ENCODE measurements at regions of chr17 and their contacts with region 1.

Region 1: DNA sequence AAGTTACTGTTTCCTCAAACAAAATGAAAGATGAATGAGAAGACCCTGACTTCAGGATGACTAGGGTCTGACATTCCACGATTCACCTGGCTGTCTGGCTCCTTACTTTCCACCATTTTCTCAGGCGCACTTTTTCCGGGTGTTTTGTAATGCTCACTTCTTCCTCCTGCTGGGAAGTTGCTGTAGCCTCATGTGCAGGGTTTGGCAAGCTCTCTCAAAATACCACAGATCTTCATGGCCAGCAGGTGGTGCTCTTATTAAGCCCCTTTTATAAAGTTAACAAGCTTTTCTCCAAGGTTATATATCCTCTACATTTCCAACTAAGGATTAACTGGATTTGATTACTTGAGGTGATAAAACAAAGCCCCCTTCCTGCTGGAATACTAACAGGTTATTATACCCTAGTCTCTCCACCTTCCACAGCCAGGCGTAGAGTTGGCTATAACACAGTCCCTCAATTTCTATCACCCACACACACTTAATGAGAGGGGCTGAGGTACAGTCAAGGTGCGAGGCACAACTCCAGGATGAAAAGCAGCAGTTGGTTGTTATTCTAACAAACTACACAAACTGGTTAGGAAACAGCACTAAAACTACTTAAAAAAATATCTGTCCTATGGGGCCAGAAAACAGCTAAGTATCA is 45.4 kb downstream of the STH start:
- DNase-seq: peak; percentile 61
- H3K4me3 ChIP-seq: no peak overlapping the region
- CTCF ChIP-seq: peak; percentile 74

Region 2: GRCh38 chr17:45995627-45996270 is 48.7 kb before region 1 on chr17:
- CTCF ChIA-PET with region 1: no interaction called
- POLR2A ChIA-PET with region 1: no interaction called
- DNase-seq: no peak
- H3K4me3 ChIP-seq: no peak overlapping the region
- CTCF ChIP-seq: no peak

Region 3: DNA sequence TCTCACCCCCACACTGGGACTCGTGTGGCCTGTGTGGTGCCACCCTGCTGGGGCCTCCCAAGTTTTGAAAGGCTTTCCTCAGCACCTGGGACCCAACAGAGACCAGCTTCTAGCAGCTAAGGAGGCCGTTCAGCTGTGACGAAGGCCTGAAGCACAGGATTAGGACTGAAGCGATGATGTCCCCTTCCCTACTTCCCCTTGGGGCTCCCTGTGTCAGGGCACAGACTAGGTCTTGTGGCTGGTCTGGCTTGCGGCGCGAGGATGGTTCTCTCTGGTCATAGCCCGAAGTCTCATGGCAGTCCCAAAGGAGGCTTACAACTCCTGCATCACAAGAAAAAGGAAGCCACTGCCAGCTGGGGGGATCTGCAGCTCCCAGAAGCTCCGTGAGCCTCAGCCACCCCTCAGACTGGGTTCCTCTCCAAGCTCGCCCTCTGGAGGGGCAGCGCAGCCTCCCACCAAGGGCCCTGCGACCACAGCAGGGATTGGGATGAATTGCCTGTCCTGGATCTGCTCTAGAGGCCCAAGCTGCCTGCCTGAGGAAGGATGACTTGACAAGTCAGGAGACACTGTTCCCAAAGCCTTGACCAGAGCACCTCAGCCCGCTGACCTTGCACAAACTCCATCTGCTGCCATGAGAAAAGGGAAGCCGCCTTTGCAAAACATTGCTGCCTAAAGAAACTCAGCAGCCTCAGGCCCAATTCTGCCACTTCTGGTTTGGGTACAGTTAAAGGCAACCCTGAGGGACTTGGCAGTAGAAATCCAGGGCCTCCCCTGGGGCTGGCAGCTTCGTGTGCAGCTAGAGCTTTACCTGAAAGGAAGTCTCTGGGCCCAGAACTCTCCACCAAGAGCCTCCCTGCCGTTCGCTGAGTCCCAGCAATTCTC is 18.0 kb before region 1 on chr17:
- CTCF ChIA-PET with region 1: interaction called, 62 read pairs
- POLR2A ChIA-PET with region 1: no interaction called
- DNase-seq: no peak
- H3K4me3 ChIP-seq: no peak overlapping the region
- CTCF ChIP-seq: no peak

Region 4: DNA sequence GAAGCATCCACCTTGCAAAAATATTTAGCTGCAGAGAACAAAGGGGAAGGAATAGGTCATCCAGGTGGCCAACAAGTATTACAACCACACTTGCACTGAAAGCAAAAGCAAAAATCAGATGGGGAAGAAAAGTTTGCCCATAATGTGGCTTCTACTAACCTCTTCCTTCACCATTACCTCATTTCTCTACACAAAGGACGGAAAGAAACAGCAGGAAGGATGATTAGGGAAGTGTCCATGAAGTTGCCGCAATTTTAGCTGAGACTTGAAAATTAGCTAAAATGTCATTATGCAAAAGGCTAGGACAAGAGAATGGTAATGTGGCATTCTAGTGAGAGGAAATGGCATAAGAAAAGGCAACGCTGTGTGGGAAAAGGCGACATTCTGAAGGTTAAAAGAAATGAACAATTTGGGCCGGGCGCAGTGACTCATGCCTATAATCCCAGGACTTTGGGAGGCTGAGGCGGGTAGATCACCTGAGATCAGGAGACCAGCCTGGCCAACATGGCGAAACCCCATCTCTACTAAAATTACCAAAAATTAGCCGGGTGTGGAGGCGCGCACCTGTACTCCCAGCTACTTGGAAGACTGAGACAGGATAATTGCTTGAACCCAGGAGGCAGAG is 135.1 kb after region 1 on chr17:
- CTCF ChIA-PET with region 1: interaction called, 42 read pairs
- POLR2A ChIA-PET with region 1: no interaction called
- DNase-seq: no peak
- H3K4me3 ChIP-seq: no peak overlapping the region
- CTCF ChIP-seq: no peak

Region 5: DNA sequence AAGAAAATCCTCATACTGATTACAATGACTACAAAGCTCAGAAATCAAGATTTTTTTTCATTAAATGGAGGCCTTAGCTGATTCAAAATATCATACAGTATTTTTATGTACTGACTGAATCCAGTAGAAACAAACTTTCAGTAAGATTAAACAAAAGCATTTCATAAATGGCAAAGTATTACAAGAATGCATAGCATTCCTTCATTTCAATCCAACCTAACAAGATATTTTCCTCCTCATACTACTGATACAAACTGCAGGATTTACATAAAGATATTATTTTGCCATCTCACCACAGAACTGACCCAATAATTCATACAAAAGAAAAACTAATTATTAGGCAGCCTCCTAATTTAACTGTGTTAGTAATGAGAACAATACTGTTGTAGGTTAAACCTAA is 155.0 kb after region 1 on chr17:
- CTCF ChIA-PET with region 1: interaction called, 23 read pairs
- POLR2A ChIA-PET with region 1: interaction called, 3 read pairs
- DNase-seq: no peak
- H3K4me3 ChIP-seq: no peak overlapping the region
- CTCF ChIP-seq: no peak

Region 6: DNA sequence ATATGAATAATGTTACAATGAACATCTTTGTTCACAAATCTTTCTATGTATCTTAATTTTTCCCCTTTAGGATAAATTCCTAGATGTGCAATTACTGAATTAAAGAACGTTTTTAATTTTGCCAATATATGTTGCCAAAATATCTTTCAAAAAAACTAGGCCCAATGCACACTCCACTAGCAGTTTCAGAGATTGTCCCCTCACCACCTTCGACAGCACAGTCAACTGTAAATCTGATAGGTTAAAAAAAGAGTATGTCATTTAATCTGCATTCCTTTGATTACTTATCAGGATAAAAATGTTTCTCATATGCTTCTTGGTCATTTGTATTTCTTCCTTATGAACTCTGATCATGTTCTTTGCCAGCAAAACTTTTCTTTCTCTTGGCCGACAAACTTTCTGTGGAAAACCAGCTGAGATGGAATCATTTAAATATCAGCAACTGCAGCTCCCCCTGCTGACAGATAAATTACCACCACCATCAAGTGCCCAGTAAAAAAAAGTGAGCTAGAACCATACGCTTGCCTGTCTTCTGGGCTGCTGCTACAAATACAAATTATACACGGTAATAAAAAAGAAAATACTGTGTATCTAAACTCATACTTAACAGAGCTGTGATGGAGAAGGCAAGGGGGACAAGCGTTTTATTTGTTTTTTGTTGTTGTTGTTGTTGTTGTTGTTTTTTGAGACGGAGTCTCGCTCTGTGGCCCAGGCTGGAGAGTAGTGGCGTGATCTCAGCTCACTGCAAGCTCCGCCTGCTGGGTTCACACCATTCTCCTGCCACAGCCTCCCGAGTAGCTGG is 168.4 kb after region 1 on chr17:
- CTCF ChIA-PET with region 1: interaction called, 87 read pairs
- POLR2A ChIA-PET with region 1: no interaction called
- DNase-seq: peak; percentile 28
- H3K4me3 ChIP-seq: no peak overlapping the region
- CTCF ChIP-seq: peak; percentile 49